Breast epithelium (tissue), 4 donors: ENCODE measurements at regions of chr11 and their contacts with region 1.

Region 1: DNA sequence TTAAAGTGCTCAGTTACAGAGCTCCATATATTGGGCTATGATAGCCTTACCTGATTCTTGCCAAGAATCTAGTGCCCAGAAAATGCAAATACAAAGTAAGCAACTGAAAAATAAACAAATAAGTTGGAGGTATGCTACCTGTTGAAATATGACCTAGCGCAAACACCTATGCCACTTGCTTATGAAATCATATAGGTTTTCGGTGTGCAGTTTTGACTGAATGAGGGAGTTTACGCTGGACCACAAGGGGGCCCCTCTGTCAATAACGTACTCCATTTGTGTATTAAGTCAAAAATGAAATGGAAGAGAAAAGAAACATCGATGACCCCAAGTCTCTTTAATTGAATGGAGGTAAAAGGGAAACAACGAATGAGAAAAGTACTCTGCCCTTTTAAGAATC is 84.9 kb upstream of the TRIM77 start:
- DNase-seq: no peak
- H3K4me3 ChIP-seq: no peak overlapping the region
- H3K27ac ChIP-seq: no peak overlapping the region
- H3K4me1 ChIP-seq: no peaks in the 10 kb centered on the region
- H3K27me3 ChIP-seq: no peaks in the 10 kb centered on the region
- CTCF ChIP-seq: no peak
- POLR2A ChIP-seq: no peak

Region 2: GRCh38 chr11:89516496-89516895 is 108.7 kb before region 1 on chr11:
- intact Hi-C with region 1: no loop called
- DNase-seq: no peak
- H3K4me3 ChIP-seq: no peak overlapping the region
- H3K27ac ChIP-seq: no peak overlapping the region
- H3K4me1 ChIP-seq: no peaks in the 10 kb centered on the region
- H3K27me3 ChIP-seq: no peaks in the 10 kb centered on the region
- CTCF ChIP-seq: no peak
- POLR2A ChIP-seq: no peak

Region 3: DNA sequence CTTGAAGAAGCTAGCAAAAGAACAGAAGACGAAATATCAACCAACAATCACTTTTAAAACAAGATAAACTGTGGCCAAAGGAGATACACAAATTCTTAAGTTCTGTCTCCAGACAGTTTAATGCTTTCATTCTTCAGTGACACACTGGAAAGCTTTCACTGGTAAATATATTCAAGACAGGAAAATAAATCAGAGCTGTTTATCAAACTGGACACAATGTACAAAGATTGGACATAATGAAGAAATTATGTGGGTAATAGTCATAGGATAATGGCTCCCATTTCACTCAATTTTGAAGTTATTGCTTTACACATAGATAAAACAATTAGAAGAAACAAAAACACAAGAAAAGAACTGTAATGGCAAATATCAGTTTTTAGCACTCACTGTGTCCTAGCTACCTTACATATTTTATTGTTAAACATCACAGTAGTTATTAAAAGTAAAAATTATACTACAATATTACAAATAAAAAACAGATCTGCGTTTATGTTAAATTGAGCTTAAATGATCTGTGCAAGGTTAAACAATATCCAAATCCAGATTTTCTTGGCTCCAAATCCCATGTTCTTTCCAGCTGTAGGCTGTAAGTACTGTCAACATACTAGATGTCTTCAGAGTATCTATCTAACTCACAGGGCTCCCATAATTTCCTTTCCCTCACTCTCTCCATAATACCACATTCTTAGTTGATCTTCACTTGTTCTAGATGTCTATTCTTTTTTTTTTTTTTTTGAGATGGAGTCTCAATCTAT is 95.4 kb before region 1 on chr11:
- intact Hi-C with region 1: loop called (anchors 5 kb)
- DNase-seq: no peak
- H3K4me3 ChIP-seq: no peak overlapping the region
- H3K27ac ChIP-seq: no peak overlapping the region
- H3K4me1 ChIP-seq: no peaks in the 10 kb centered on the region
- H3K27me3 ChIP-seq: no peaks in the 10 kb centered on the region
- CTCF ChIP-seq: no peak
- POLR2A ChIP-seq: no peak

Region 4: GRCh38 chr11:90216611-90217010 is 591.4 kb after region 1 on chr11:
- intact Hi-C with region 1: no loop called
- DNase-seq: no peak
- H3K4me3 ChIP-seq: no peak overlapping the region
- H3K27ac ChIP-seq: no peak overlapping the region
- H3K4me1 ChIP-seq: no peaks in the 10 kb centered on the region
- H3K27me3 ChIP-seq: no peaks in the 10 kb centered on the region
- CTCF ChIP-seq: no peak
- POLR2A ChIP-seq: no peak

Region 5: DNA sequence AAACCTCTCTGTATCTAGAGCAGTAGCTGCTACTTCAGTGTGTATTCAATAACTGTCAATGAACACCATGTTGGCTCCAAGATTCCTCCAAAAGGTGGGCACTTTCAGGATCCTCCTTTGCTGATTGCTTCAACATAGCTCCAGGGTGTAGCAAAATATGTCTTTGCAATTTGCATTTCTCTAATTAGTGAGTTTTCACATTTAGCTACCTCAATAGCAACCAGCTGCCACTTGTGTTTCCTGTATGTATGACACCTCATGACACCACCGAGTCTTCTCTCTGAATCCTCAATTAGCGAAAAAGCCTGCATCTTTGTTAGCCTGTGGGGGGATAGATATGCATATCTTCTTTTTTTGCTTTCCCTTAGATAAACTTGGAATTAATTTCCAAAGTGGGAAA is 1701.1 kb after region 1 on chr11:
- intact Hi-C with region 1: no loop called
- DNase-seq: no peak
- H3K4me3 ChIP-seq: no peak overlapping the region
- H3K27ac ChIP-seq: no peak overlapping the region
- H3K4me1 ChIP-seq: no peaks in the 10 kb centered on the region
- H3K27me3 ChIP-seq: no peaks in the 10 kb centered on the region
- CTCF ChIP-seq: no peak
- POLR2A ChIP-seq: no peak